Activated CD4-positive, alpha-beta T cell treated with anti-CD3 and anti-CD28 coated beads for 36 hours (primary cell): ENCODE measurements at regions of chr9 and their contacts with region 1.

Region 1: DNA sequence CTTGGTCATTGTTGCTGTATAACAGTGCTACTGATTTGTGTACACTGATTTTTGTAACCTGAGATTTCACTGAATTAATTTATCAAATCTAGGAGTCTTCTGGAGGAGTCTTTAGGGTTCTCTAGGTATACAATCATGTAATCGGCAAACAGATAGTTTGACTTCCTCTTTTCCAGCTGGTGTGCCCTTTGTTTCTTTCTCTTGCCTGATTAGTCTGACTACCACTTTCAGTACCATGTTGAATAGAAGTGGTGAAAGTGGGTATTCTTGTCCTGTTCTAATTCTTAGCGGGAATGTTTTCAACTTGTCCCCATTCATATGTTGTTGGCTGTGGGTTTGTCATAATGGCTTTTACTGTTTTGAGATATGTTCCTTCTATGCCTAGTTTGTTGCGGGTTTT is 24.7 kb upstream of the RANBP6 start:
- DNase-seq: no peak
- ATAC-seq: no peak
- H3K4me3 Mint-ChIP-seq: no peak overlapping the region
- H3K27ac Mint-ChIP-seq: no peak overlapping the region
- H3K4me1 Mint-ChIP-seq: no peaks in the 10 kb centered on the region
- H3K27me3 Mint-ChIP-seq: peaks cover 6% of the 10 kb centered on the region

Region 2: GRCh38 chr9:5971740-5972139 is 68.3 kb before region 1 on chr9:
- CTCF ChIA-PET with region 1: no interaction called
- POLR2A ChIA-PET with region 1: no interaction called
- intact Hi-C with region 1: loop called in 1 of 2 experiments (anchors 5 kb)
- DNase-seq: no peak
- ATAC-seq: no peak
- H3K4me3 Mint-ChIP-seq: no peak overlapping the region
- H3K27ac Mint-ChIP-seq: no peak overlapping the region
- H3K4me1 Mint-ChIP-seq: peaks cover 15% of the 10 kb centered on the region
- H3K27me3 Mint-ChIP-seq: no peaks in the 10 kb centered on the region